Activated CD4-positive, alpha-beta memory T cell treated with anti-CD3 and anti-CD28 coated beads, Interleukin-2, amount 10 ng/mL, durations not matched to agents 7 days and 5 days (primary cell): ENCODE measurements at regions of chr22 and their contacts with region 1.

Region 1: DNA sequence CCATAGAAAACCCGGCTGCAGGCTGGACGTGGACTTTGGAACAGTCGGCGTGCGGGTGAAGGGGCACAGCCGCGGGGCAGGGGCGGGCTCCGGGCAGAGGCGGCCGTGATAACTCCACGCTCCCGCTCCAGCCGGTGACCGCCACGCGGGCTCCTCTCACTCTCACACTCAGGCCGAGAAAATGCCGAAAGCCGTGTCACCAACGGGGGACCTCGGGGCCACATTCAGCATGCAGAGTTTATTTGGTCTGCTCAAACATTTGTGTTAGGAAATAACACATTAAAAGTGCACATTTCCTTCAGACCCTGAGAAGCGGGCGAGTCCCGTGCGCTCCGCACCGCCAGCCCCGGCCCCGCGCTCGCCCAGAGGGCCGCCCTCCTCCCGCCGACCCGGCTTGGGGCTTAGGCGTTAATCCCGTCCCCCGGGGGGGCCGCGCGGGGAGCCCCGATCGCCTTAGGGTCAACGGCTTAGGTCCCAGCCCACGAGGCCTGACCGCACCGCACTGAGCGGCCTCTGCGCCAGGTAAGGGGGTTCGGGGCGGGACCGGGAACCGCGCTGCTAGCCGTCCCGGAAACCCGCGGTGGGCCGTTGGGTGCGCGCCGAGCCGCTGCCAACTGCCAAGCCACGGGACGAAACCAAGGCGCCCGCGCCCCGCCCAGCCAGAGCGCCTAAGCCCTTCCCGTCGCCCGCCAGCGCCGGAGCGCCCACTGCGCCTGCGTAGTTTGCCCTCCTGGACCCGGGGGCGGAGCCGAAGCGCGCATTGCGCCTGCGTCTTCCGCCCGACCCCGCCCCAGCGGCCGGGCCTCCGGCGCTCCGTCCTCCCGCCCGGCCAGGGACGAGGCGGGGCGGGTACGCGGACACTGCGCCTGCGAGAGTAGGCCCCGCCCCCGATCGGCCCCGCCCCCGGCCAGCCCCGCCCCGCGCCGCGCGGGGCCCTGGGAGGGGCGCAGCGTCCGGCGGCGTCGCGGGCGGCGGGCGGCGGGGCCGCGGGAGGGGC is at the start of gene ZBED4:
- DNase-seq: peak; percentile 99
- H3K4me3 Mint-ChIP-seq: peak within 1 kb of the TSS; percentile 95
- H3K27ac Mint-ChIP-seq: peak within 1 kb of the TSS; percentile 89
- H3K4me1 Mint-ChIP-seq: peaks cover 53% of the 10 kb centered on the region
- H3K27me3 Mint-ChIP-seq: peaks cover 1% of the 10 kb centered on the region
- total RNA-seq, gene ZBED4: 20.6 to 21.8 TPM

Region 2: DNA sequence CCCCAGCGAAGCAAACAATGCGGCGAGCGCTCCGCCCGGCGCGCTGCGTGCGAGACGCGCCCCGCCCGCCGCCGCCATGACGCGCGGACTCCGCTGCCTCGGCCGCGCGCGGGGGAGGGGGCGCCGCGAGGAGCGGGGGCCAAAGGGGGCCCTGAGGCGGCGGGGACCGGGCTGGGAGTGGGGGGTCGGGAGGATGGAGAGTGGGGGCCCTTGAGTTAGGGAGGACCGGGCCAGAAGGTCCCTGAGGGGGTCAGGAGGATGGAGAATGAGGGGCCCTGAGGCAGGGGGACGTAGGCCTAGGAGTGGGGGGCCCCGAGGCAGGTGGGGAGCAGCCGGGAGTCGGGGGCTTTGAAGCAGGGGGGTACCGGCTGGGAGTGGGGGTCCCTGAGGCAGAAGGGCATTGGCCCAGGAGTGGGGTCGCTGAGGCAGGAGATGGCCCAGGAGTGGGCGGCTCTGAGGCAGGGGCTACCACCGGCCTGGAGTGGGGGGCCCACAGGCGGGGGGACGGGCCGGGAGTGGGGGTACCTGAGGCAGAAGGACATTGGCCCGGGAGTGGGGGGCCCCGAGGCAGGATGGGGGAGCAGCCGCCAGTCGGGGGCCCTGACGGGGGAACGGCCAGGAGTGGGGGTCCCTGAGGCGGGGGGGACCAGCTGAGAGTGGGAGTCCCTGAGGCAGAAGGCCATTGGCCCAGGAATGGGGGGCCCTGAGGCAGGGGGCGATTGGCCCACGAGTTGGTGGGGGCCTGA is 25.2 kb before region 1 on chr22 and contains the start of gene BRD1:
- CTCF ChIA-PET with region 1: no interaction called
- POLR2A ChIA-PET with region 1: interaction called, 38 read pairs
- DNase-seq: peak; percentile 68
- H3K4me3 Mint-ChIP-seq: peak within 1 kb of the TSS; percentile 92
- H3K27ac Mint-ChIP-seq: peak within 1 kb of the TSS; percentile 99
- H3K4me1 Mint-ChIP-seq: peaks cover 61% of the 10 kb centered on the region
- H3K27me3 Mint-ChIP-seq: no peaks in the 10 kb centered on the region
- total RNA-seq, gene BRD1: 54.7 to 55.4 TPM

Region 3: GRCh38 chr22:49838771-49839717 is 14.2 kb before region 1 on chr22:
- CTCF ChIA-PET with region 1: interaction called, 7 read pairs
- POLR2A ChIA-PET with region 1: interaction called, 20 read pairs
- DNase-seq: peak; percentile 90
- H3K4me3 Mint-ChIP-seq: peak overlapping the region; percentile 63
- H3K27ac Mint-ChIP-seq: peak overlapping the region; percentile 96
- H3K4me1 Mint-ChIP-seq: peaks cover 44% of the 10 kb centered on the region
- H3K27me3 Mint-ChIP-seq: no peaks in the 10 kb centered on the region

Region 4: GRCh38 chr22:49867303-49868265 is 14.4 kb after region 1 on chr22:
- CTCF ChIA-PET with region 1: no interaction called
- POLR2A ChIA-PET with region 1: interaction called, 18 read pairs
- DNase-seq: no peak
- H3K4me3 Mint-ChIP-seq: no peak overlapping the region
- H3K27ac Mint-ChIP-seq: peak overlapping the region; percentile 77
- H3K4me1 Mint-ChIP-seq: peaks cover 70% of the 10 kb centered on the region
- H3K27me3 Mint-ChIP-seq: no peaks in the 10 kb centered on the region

Region 5: DNA sequence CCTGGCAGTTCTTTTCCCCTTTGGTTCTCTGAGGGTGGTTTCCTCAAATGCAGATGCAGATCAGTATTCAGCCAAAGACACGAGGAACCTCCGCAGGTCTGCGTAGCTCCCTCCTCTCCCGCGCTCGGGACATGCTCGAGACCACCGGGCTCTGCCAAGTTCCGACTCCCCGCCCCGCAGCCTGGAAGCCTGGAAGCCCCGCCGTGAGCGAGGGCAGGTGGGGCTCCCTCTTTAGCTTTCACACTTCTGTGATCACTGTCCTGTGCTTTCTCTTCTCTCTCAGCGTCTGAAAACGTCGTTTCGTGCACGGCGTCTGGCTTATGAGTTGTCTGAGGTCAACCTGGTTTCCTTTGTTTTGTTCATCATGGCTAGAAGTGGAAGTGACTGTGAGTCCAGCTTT is 27.1 kb after region 1 on chr22:
- CTCF ChIA-PET with region 1: no interaction called
- POLR2A ChIA-PET with region 1: interaction called, 10 read pairs
- DNase-seq: peak; percentile 42
- H3K4me3 Mint-ChIP-seq: peak overlapping the region; percentile 33
- H3K27ac Mint-ChIP-seq: peak overlapping the region; percentile 67
- H3K4me1 Mint-ChIP-seq: peaks cover 36% of the 10 kb centered on the region
- H3K27me3 Mint-ChIP-seq: no peaks in the 10 kb centered on the region

Region 6: DNA sequence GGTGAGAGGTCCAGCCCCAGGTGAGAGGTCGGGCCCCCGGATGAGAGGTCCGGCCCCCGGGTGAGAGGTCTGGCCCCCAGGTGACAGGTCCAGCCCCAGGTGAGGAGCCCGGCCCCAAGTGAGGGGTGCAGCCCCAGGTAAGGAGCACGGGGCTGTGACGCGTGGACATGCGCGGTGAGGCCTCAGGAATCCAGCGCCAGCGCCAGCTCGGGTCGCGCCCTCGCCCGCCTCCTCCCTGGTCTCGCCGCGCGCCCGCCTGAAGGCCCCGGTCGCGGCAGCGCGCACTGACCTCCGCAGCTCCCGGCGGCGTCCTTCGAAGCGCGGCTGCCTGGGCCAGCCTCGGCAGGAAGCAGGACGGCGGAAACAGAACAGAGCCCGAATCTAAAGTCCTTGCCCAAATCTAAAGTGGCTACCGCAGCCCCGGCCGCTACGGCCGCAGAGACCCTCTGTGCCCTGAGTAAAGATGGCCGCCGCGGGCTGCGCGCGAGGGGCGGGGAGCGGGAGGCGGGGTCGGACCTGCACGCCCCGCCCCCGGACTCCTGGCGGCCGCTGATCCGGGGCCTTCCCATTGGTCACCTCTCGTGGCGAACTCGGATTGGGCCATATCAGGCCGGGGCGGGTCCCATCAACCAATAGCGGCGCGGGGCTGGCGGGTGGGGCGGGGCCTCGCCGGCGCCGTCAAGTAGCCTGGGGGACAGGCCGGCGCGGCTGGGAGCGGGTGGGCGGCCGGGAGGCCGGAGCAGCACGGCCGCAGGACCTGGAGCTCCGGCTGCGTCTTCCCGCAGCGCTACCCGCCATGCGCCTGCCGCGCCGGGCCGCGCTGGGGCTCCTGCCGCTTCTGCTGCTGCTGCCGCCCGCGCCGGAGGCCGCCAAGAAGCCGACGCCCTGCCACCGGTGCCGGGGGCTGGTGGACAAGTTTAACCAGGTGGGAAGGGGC is 65.0 kb after region 1 on chr22 and contains the starts of genes ALG12 and CRELD2:
- CTCF ChIA-PET with region 1: no interaction called
- POLR2A ChIA-PET with region 1: interaction called, 11 read pairs
- DNase-seq: peak; percentile 97
- H3K4me3 Mint-ChIP-seq: peak within 1 kb of the TSS; percentile 80
- H3K27ac Mint-ChIP-seq: peak within 1 kb of the TSS; percentile 81
- H3K4me1 Mint-ChIP-seq: peaks cover 24% of the 10 kb centered on the region
- H3K27me3 Mint-ChIP-seq: no peaks in the 10 kb centered on the region
- total RNA-seq, gene ALG12: 14.7 to 20.6 TPM
- total RNA-seq, gene CRELD2: 50.0 to 51.2 TPM